CD4-positive, alpha-beta T cell (primary cell): ENCODE measurements at regions of chr1 and their contacts with region 1.

Region 1: GRCh38 chr1:45303582-45304310 is 22.9 kb upstream of the HPDL start:
- DNase-seq: peak; percentile 96 to 100 (median 98)
- ATAC-seq: peak; percentile 85
- H3K4me3 ChIP-seq: peak overlapping the region; percentile 84
- H3K4me3 Mint-ChIP-seq: peak overlapping the region; percentile 95
- H3K27ac ChIP-seq: peak overlapping the region; percentile 67 to 95
- H3K27ac Mint-ChIP-seq: peak overlapping the region; percentile 95
- H3K4me1 ChIP-seq: peaks cover 24% of the 10 kb centered on the region
- H3K4me1 Mint-ChIP-seq: peaks cover 30% of the 10 kb centered on the region
- H3K27me3 ChIP-seq: no peaks in the 10 kb centered on the region
- H3K27me3 Mint-ChIP-seq: no peaks in the 10 kb centered on the region
- CTCF ChIP-seq: peak; percentile 84

Region 2: DNA sequence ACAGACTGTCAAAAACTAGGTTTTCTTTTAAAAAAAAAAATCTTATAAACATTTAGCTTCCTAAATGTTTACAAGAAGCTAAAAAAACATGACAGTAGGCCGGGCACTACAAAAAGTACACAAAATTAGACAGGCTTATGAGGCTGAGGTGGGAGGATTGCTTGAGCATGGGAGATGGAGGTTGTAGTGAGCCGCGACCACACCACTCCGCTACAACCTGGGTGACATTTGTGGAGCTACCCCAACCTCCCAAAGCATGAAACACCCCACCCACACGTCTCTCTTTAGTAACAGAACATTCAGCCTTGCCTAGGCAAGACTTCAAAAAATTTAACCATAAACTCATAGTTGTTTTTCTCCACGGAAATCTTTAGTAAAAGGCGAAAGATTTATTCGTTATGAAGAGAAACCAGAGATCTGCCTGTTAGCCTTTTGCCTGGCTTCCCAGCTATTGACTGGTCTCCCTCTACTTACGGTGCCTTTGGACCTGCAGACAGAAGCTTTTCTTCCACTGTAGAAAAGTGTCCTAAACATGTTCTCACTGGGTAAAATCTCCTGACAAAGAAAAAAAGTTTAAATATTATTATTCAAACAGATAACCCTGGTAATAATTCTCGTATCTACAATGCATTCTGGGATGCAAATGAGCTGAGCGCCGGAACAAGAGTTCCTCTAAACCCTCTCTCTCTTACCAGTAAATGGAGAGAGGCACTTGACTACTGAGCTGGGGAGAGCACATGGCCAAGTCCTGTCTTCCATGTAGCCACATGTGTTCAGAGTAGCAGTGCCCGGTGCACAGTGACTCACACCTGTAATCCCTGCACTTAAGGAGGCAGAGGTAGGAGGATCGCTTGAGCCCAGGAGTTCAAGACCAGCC is 582.0 kb before region 1 on chr1:
- CTCF ChIA-PET with region 1: no interaction called
- POLR2A ChIA-PET with region 1: interaction called, 24 read pairs
- intact Hi-C with region 1: loop called in 1 of 2 experiments (anchors 5 kb)
- DNase-seq: peak; percentile 16 to 93 (median 48)
- ATAC-seq: peak; percentile 75
- H3K4me3 ChIP-seq: peak overlapping the region; percentile 6
- H3K4me3 Mint-ChIP-seq: peak overlapping the region; percentile 84
- H3K27ac ChIP-seq: peak overlapping the region; percentile 30 to 76
- H3K27ac Mint-ChIP-seq: peak overlapping the region; percentile 90
- H3K4me1 ChIP-seq: peaks cover 77% of the 10 kb centered on the region
- H3K4me1 Mint-ChIP-seq: peaks cover 68% of the 10 kb centered on the region
- H3K27me3 ChIP-seq: no peaks in the 10 kb centered on the region
- H3K27me3 Mint-ChIP-seq: no peaks in the 10 kb centered on the region
- CTCF ChIP-seq: no peak

Region 3: GRCh38 chr1:44792783-44793714 is 510.7 kb before region 1 on chr1:
- CTCF ChIA-PET with region 1: interaction called, 3 read pairs
- POLR2A ChIA-PET with region 1: no interaction called
- intact Hi-C with region 1: loop called (anchors 2 to 5 kb)
- DNase-seq: no peak
- ATAC-seq: no peak
- H3K4me3 ChIP-seq: no peak overlapping the region
- H3K4me3 Mint-ChIP-seq: no peak overlapping the region
- H3K27ac ChIP-seq: no peak overlapping the region
- H3K27ac Mint-ChIP-seq: no peak overlapping the region
- H3K4me1 ChIP-seq: no peaks in the 10 kb centered on the region
- H3K4me1 Mint-ChIP-seq: peaks cover 4% of the 10 kb centered on the region
- H3K27me3 ChIP-seq: no peaks in the 10 kb centered on the region
- H3K27me3 Mint-ChIP-seq: no peaks in the 10 kb centered on the region
- CTCF ChIP-seq: no peak

Region 4: DNA sequence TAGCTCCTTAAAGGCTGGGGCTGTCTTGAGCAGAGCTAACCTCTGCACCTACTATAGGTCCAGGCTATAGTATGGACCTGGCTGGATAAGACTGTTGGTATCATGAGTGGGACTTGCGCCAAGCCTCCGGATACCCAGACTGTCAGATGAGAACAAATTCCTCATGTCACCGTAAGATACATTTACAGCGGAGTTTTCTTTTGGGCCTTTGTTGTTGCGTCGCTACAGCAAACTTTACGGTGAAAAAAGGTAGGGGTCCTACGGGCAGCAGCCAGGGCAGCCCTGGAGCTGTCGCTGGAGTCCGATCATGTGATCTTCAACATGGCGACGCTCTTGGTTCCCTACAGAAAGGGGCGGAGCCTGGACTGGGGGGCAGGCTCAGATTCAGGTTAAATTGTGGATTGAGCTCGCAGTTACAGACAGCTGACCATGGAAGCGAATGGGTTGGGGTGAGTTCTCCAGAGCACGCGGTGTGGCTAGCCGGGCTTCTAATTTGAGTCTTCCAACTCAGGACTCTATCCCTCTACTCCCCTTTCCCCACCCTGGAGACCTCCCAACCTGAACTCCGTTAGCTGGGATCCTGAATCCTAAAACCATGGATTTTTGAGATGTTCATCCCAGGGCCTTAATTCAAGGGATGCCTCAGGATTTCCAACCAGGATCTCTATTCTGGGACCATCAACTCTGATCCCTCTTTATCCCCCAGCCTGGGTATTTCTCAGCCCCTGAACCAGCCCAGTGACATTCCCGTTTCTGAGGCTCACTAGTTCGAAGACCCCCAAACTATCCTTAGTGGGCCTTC is 291.7 kb before region 1 on chr1 and contains the start of gene UROD:
- CTCF ChIA-PET with region 1: interaction called, 66 read pairs
- POLR2A ChIA-PET with region 1: interaction called, 141 read pairs
- intact Hi-C with region 1: loop called (anchors 1 kb)
- DNase-seq: peak; percentile 77 to 96 (median 86)
- ATAC-seq: peak; percentile 82
- H3K4me3 ChIP-seq: peak within 1 kb of the TSS; percentile 84
- H3K4me3 Mint-ChIP-seq: peak within 1 kb of the TSS; percentile 89
- H3K27ac ChIP-seq: peak within 1 kb of the TSS; percentile 59 to 62
- H3K27ac Mint-ChIP-seq: peak within 1 kb of the TSS; percentile 91
- H3K4me1 ChIP-seq: peaks cover 63% of the 10 kb centered on the region
- H3K4me1 Mint-ChIP-seq: peaks cover 61% of the 10 kb centered on the region
- H3K27me3 ChIP-seq: no peaks in the 10 kb centered on the region
- H3K27me3 Mint-ChIP-seq: no peaks in the 10 kb centered on the region
- CTCF ChIP-seq: no peak
- total RNA-seq, gene UROD: 41.0 to 42.4 TPM

Region 5: GRCh38 chr1:45490626-45491486 is 187.1 kb after region 1 on chr1 and contains the start of gene TESK2:
- CTCF ChIA-PET with region 1: interaction called, 16 read pairs
- POLR2A ChIA-PET with region 1: interaction called, 29 read pairs
- intact Hi-C with region 1: loop called (anchors 1 to 2 kb)
- DNase-seq: peak; percentile 92 to 100 (median 95)
- ATAC-seq: peak; percentile 92
- H3K4me3 ChIP-seq: peak within 1 kb of the TSS; percentile 82
- H3K4me3 Mint-ChIP-seq: no peak within 1 kb of the TSS
- H3K27ac ChIP-seq: peak within 1 kb of the TSS; percentile 55 to 70
- H3K27ac Mint-ChIP-seq: no peak within 1 kb of the TSS
- H3K4me1 ChIP-seq: peaks cover 28% of the 10 kb centered on the region
- H3K4me1 Mint-ChIP-seq: peaks cover 5% of the 10 kb centered on the region
- H3K27me3 ChIP-seq: no peaks in the 10 kb centered on the region
- H3K27me3 Mint-ChIP-seq: no peaks in the 10 kb centered on the region
- CTCF ChIP-seq: no peak
- total RNA-seq, gene TESK2: 2.8 to 3.4 TPM

Region 6: GRCh38 chr1:45750298-45751038 is 446.7 kb after region 1 on chr1 and contains the start of gene IPP:
- CTCF ChIA-PET with region 1: interaction called, 3 read pairs
- POLR2A ChIA-PET with region 1: no interaction called
- intact Hi-C with region 1: loop called in 1 of 2 experiments (anchors 2 kb)
- DNase-seq: peak; percentile 76 to 97 (median 87)
- ATAC-seq: peak; percentile 84
- H3K4me3 ChIP-seq: peak within 1 kb of the TSS; percentile 67
- H3K4me3 Mint-ChIP-seq: peak within 1 kb of the TSS; percentile 91
- H3K27ac ChIP-seq: peak within 1 kb of the TSS; percentile 92 to 94
- H3K27ac Mint-ChIP-seq: peak within 1 kb of the TSS; percentile 97
- H3K4me1 ChIP-seq: peaks cover 26% of the 10 kb centered on the region
- H3K4me1 Mint-ChIP-seq: peaks cover 43% of the 10 kb centered on the region
- H3K27me3 ChIP-seq: no peaks in the 10 kb centered on the region
- H3K27me3 Mint-ChIP-seq: no peaks in the 10 kb centered on the region
- CTCF ChIP-seq: peak; percentile 42
- total RNA-seq, gene IPP: 6.0 to 6.6 TPM